ENCODE measurements at regions of chr11 and their contacts with region 1.

Region 1: DNA sequence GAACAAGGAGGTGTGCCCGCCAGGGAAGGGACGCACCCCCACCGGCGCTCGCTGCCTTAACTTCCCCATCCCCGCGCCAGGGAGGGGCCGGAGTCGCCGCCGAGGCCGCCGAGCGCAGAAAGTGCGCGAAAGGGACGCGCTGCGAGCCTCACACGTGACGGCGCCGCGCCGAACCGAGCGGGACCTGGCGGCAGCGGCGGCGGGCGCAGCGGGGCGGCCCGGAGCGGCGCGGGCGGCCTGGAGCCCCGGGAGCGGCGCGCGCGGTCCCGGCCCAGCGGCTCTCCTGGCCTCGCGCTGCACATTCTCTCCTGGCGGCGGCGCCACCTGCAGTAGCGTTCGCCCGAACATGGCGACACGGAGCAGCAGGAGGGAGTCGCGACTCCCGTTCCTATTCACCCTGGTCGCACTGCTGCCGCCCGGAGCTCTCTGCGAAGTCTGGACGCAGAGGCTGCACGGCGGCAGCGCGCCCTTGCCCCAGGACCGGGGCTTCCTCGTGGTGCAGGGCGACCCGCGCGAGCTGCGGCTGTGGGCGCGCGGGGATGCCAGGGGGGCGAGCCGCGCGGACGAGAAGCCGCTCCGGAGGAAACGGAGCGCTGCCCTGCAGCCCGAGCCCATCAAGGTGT is at the start of gene SORL1:
- DNase-seq: peak; percentile 66
- H3K4me3 Mint-ChIP-seq: peak within 1 kb of the TSS; percentile 90
- H3K27ac Mint-ChIP-seq: peak within 1 kb of the TSS; percentile 91
- H3K4me1 Mint-ChIP-seq: peaks cover 77% of the 10 kb centered on the region
- H3K27me3 Mint-ChIP-seq: no peaks in the 10 kb centered on the region
- total RNA-seq, gene SORL1: 20.2 and 20.3 TPM in 2 replicates

Region 2: GRCh38 chr11:121292495-121293287 is 159.4 kb before region 1 on chr11 and contains the start of gene SC5D:
- intact Hi-C with region 1: loop called (anchors 2 kb)
- DNase-seq: peak; percentile 92
- H3K4me3 Mint-ChIP-seq: peak within 1 kb of the TSS; percentile 88
- H3K27ac Mint-ChIP-seq: peak within 1 kb of the TSS; percentile 87
- H3K4me1 Mint-ChIP-seq: peaks cover 36% of the 10 kb centered on the region
- H3K27me3 Mint-ChIP-seq: peaks cover 9% of the 10 kb centered on the region
- total RNA-seq, gene SC5D: 23.2 and 28.0 TPM in 2 replicates

Region 3: DNA sequence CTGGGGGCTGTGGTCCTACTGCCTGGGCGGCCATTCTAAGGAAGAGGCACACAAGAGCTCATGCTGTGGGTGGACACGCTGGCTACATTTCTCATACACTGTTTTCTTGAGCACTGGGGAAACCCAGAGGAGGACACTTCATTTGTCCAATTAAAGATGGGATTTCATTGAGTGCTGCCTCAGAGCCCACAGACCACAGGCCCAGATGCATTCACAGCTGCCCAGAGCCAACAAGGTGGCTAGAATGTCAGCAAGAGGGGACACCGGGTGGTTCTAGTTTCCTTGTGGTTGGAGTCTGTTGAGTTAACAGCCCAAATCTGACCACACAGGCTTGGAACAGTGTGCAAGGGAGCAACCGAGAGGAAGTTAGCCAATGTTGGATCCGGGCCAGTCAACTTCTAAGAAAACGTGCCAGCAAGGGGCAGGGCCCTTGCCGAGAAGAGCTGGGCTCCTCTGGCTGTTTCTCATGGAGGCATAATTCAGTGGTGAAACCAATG is 35.0 kb before region 1 on chr11:
- intact Hi-C with region 1: loop called (anchors 2 kb)
- DNase-seq: peak; percentile 33
- H3K4me3 Mint-ChIP-seq: no peak overlapping the region
- H3K27ac Mint-ChIP-seq: peak overlapping the region; percentile 51
- H3K4me1 Mint-ChIP-seq: peaks cover 51% of the 10 kb centered on the region
- H3K27me3 Mint-ChIP-seq: no peaks in the 10 kb centered on the region

Region 4: GRCh38 chr11:121482231-121483129 is 30.4 kb after region 1 on chr11:
- intact Hi-C with region 1: loop called (anchors 1 kb)
- DNase-seq: peak; percentile 52
- H3K4me3 Mint-ChIP-seq: peak overlapping the region; percentile 71
- H3K27ac Mint-ChIP-seq: peak overlapping the region; percentile 92
- H3K4me1 Mint-ChIP-seq: peaks cover 33% of the 10 kb centered on the region
- H3K27me3 Mint-ChIP-seq: no peaks in the 10 kb centered on the region

Region 5: DNA sequence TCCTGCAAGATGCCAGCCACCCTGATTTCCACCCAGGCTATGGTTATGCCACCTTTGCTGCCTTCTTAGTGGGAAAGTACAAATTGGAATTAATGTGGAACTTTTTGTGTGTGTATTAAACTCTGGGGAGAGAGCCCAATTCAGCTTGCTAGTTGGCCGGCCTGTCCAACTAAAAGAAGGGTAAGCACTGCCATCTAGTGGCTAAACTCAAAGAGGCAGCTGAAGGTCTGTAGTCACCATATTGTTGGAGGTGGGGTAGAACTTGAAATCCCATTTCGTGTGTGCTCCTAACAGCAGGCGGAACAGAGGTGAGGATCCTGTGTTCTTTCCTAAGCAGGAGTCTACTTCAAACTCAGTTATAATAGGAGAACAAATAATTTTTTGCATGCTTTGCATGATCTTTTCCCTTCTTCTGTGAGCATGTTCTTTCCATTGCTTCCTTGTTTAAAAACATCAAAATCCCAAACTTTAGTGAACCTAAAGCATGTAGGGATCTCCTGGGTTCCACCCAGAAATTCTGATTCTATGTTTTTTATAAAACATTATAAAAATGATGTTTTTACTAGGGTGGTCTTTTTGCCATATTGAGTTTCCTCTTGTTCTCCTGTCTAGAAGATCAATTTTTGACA is 139.4 kb after region 1 on chr11:
- intact Hi-C with region 1: loop called (anchors 2 kb)
- DNase-seq: peak; percentile 56
- H3K4me3 Mint-ChIP-seq: no peak overlapping the region
- H3K27ac Mint-ChIP-seq: no peak overlapping the region
- H3K4me1 Mint-ChIP-seq: peaks cover 21% of the 10 kb centered on the region
- H3K27me3 Mint-ChIP-seq: no peaks in the 10 kb centered on the region

Measured in activated T-helper 2 cell treated with anti-CD3 and anti-CD28 coated beads, Interferon-gamma antibody, Interleukin-2, Interleukin-4, amounts not matched to agents 10 μg/mL and 5 μg/mL and 100 μg/mL, durations not matched to agents 14 hours and 24 hours and 36 hours (primary cell).